ENCODE measurements at regions of chr16 and their contacts with region 1.

Region 1: GRCh38 chr16:49918257-49918656 is 62.3 kb upstream of the ZNF423 start:
- DNase-seq: no peak
- ATAC-seq: no peak
- H3K4me3 ChIP-seq: no peak overlapping the region
- H3K27ac ChIP-seq: no peak overlapping the region
- H3K4me1 ChIP-seq: no peaks in the 10 kb centered on the region
- H3K27me3 ChIP-seq: no peaks in the 10 kb centered on the region
- CTCF ChIP-seq: no peak
- POLR2A ChIP-seq: no peak

Region 2: GRCh38 chr16:49491771-49492761 is 426.2 kb before region 1 on chr16:
- intact Hi-C with region 1: loop called (anchors 10 kb)
- DNase-seq: peak; percentile 13 to 53 (median 42)
- ATAC-seq: peak; percentile 76
- H3K4me3 ChIP-seq: no peak overlapping the region
- H3K27ac ChIP-seq: no peak overlapping the region
- H3K4me1 ChIP-seq: peaks cover 8% of the 10 kb centered on the region
- H3K27me3 ChIP-seq: no peaks in the 10 kb centered on the region
- CTCF ChIP-seq: peak; percentile 59 to 91 (median 70)
- POLR2A ChIP-seq: no peak

Region 3: GRCh38 chr16:49811644-49812334 is 106.5 kb before region 1 on chr16:
- intact Hi-C with region 1: no loop called
- DNase-seq: peak; percentile 52 to 78 (median 71)
- ATAC-seq: peak; percentile 74
- H3K4me3 ChIP-seq: no peak overlapping the region
- H3K27ac ChIP-seq: no peak overlapping the region
- H3K4me1 ChIP-seq: peaks cover 12% of the 10 kb centered on the region
- H3K27me3 ChIP-seq: no peaks in the 10 kb centered on the region
- CTCF ChIP-seq: no peak
- POLR2A ChIP-seq: no peak

Region 4: GRCh38 chr16:49986351-49987124 is 68.3 kb after region 1 on chr16:
- intact Hi-C with region 1: no loop called
- DNase-seq: no peak
- ATAC-seq: no peak
- H3K4me3 ChIP-seq: no peak overlapping the region
- H3K27ac ChIP-seq: no peak overlapping the region
- H3K4me1 ChIP-seq: no peaks in the 10 kb centered on the region
- H3K27me3 ChIP-seq: no peaks in the 10 kb centered on the region
- CTCF ChIP-seq: no peak
- POLR2A ChIP-seq: no peak

Measured in body of pancreas (tissue), 4 donors.